ENCODE measurements at regions of chr15 and their contacts with region 1.

Region 1: GRCh38 chr15:90931737-90932659 is at the start of gene HDDC3:
- DNase-seq: peak; percentile 96
- ATAC-seq: peak; percentile 49
- H3K4me3 Mint-ChIP-seq: peak within 1 kb of the TSS; percentile 95
- H3K27ac Mint-ChIP-seq: peak within 1 kb of the TSS; percentile 95
- H3K4me1 Mint-ChIP-seq: peaks cover 23% of the 10 kb centered on the region
- H3K27me3 Mint-ChIP-seq: peaks cover 12% of the 10 kb centered on the region
- CTCF ChIP-seq: peak; percentile 83
- total RNA-seq, gene HDDC3: 16.4 to 23.6 TPM (median 21.7 TPM) in 3 replicates

Region 2: GRCh38 chr15:90648137-90649070 is 283.6 kb before region 1 on chr15:
- CTCF ChIA-PET with region 1: interaction called, 32 read pairs
- POLR2A ChIA-PET with region 1: no interaction called
- DNase-seq: peak; percentile 59
- ATAC-seq: peak; percentile 83
- H3K4me3 Mint-ChIP-seq: no peak overlapping the region
- H3K27ac Mint-ChIP-seq: no peak overlapping the region
- H3K4me1 Mint-ChIP-seq: peaks cover 19% of the 10 kb centered on the region
- H3K27me3 Mint-ChIP-seq: no peaks in the 10 kb centered on the region
- CTCF ChIP-seq: peak; percentile 89

Region 3: GRCh38 chr15:90839187-90840071 is 92.6 kb before region 1 on chr15:
- CTCF ChIA-PET with region 1: interaction called, 26 read pairs
- POLR2A ChIA-PET with region 1: no interaction called
- DNase-seq: peak; percentile 72
- ATAC-seq: peak; percentile 93
- H3K4me3 Mint-ChIP-seq: peak overlapping the region; percentile 22
- H3K27ac Mint-ChIP-seq: peak overlapping the region; percentile 93
- H3K4me1 Mint-ChIP-seq: peaks cover 53% of the 10 kb centered on the region
- H3K27me3 Mint-ChIP-seq: no peaks in the 10 kb centered on the region
- CTCF ChIP-seq: no peak

Region 4: GRCh38 chr15:90886041-90886614 is 45.9 kb before region 1 on chr15:
- CTCF ChIA-PET with region 1: interaction called, 75 read pairs
- POLR2A ChIA-PET with region 1: no interaction called
- DNase-seq: peak; percentile 89
- ATAC-seq: peak; percentile 47
- H3K4me3 Mint-ChIP-seq: no peak overlapping the region
- H3K27ac Mint-ChIP-seq: no peak overlapping the region
- H3K4me1 Mint-ChIP-seq: peaks cover 22% of the 10 kb centered on the region
- H3K27me3 Mint-ChIP-seq: no peaks in the 10 kb centered on the region
- CTCF ChIP-seq: peak; percentile 93

Region 5: DNA sequence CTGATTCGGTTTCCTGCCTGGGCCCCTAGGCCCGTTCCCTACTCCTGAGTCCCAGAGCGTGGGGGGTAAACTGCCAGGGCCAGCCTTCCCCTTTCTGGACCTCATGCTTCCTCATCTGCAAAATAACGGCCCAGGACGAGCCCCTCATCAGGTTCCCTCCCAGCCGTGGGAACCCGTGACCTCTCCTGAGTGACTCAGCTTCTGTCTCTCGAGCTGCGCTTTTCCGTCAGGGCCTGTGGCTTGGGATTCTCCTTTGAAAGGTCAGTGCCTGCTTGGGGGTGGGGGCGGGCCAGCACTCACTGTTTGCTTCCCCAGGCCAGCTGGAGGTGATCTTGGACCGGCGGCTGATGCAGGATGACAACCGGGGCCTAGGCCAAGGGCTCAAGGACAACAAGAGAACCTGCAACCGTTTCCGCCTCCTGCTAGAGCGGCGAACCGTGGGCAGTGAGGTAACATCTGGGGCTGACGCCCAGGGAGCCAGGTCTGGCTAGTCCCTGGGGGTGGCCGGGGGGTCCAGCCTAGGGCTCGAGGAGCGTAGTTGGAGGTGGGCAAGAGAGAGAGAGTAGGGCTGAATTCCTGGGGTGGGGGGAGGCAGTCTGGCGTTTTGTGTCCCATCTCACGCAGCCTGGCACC is 16.1 kb before region 1 on chr15:
- CTCF ChIA-PET with region 1: interaction called, 75 read pairs
- POLR2A ChIA-PET with region 1: no interaction called
- DNase-seq: no peak
- ATAC-seq: peak; percentile 30
- H3K4me3 Mint-ChIP-seq: no peak overlapping the region
- H3K27ac Mint-ChIP-seq: peak overlapping the region; percentile 36
- H3K4me1 Mint-ChIP-seq: no peaks in the 10 kb centered on the region
- H3K27me3 Mint-ChIP-seq: no peaks in the 10 kb centered on the region; the same call in 1 of the 2 replicates
- CTCF ChIP-seq: no peak

Region 6: GRCh38 chr15:91022075-91022835 is 90.3 kb after region 1 on chr15 and contains the start of gene VPS33B:
- CTCF ChIA-PET with region 1: interaction called, 10 read pairs
- POLR2A ChIA-PET with region 1: no interaction called
- DNase-seq: peak; percentile 82
- ATAC-seq: peak; percentile 92
- H3K4me3 Mint-ChIP-seq: peak within 1 kb of the TSS; percentile 88
- H3K27ac Mint-ChIP-seq: peak within 1 kb of the TSS; percentile 89
- H3K4me1 Mint-ChIP-seq: peaks cover 11% of the 10 kb centered on the region
- H3K27me3 Mint-ChIP-seq: no peaks in the 10 kb centered on the region
- CTCF ChIP-seq: no peak
- total RNA-seq, gene VPS33B: 18.1 to 21.1 TPM (median 20.7 TPM) in 3 replicates

Region 7: GRCh38 chr15:91271565-91272153 is 339.7 kb after region 1 on chr15:
- CTCF ChIA-PET with region 1: interaction called, 23 read pairs
- POLR2A ChIA-PET with region 1: no interaction called
- DNase-seq: peak; percentile 64
- ATAC-seq: peak; percentile 67; the same call in 1 of the 2 replicates
- H3K4me3 Mint-ChIP-seq: no peak overlapping the region
- H3K27ac Mint-ChIP-seq: no peak overlapping the region
- H3K4me1 Mint-ChIP-seq: no peaks in the 10 kb centered on the region
- H3K27me3 Mint-ChIP-seq: peaks cover 13% of the 10 kb centered on the region
- CTCF ChIP-seq: peak; percentile 69

Measured in WTC11 (cell line).